Astrocyte of the cerebellum (primary cell): ENCODE measurements at regions of chr7 and their contacts with region 1.

Region 1: GRCh38 chr7:29217113-29217512 is 22.5 kb downstream of the CHN2 start:
- DNase-seq: no peak
- H3K4me3 ChIP-seq: no peak overlapping the region
- CTCF ChIP-seq: no peak

Region 2: GRCh38 chr7:29319719-29320521 is 102.8 kb after region 1 on chr7:
- in situ Hi-C with region 1: loop called (anchors 5 kb)
- DNase-seq: no peak
- H3K4me3 ChIP-seq: no peak overlapping the region
- CTCF ChIP-seq: no peak